Aorta (tissue), 5 donors: ENCODE measurements at regions of chr19 and their contacts with region 1.

Region 1: DNA sequence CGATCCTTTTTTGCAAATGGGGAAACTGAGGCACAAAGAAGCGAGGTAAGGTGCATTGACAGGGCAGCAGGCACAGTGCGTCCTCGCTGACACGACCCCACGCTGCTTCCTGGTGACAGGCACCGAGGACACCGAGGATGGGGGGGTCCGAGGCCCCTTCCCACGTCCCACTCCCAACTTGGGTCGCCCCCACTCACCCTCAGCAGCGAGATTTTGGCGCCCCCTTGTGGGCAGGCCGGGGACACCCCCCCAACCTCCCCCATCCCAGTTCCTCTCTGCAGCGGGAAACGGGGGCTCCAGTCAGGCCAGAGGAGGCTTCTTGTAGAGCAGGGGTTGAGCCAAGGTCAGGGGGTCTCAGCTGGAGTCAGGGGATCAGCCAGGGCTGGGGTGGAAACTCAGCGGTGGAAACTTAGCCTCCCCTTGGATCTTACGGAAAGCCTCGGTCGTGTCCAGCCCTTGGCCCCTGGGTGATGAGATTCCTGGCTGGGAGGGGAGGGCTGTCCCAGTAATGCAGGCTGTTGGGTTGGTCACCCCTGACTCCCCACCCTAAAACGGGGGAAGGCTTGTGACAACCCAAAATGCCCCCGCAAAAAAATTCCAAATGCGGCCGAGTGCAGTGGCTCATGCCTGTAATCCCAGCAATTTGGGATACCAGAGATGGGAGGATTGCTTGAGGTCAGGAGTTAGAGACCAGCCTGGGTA is 8.2 kb downstream of the SMIM24 start:
- DNase-seq: peak; percentile 63 to 88
- ATAC-seq: peak; percentile 74
- H3K4me3 ChIP-seq: no peak overlapping the region
- H3K27ac ChIP-seq: no peak overlapping the region
- H3K4me1 ChIP-seq: no peaks in the 10 kb centered on the region
- H3K27me3 ChIP-seq: no peaks in the 10 kb centered on the region

Region 2: DNA sequence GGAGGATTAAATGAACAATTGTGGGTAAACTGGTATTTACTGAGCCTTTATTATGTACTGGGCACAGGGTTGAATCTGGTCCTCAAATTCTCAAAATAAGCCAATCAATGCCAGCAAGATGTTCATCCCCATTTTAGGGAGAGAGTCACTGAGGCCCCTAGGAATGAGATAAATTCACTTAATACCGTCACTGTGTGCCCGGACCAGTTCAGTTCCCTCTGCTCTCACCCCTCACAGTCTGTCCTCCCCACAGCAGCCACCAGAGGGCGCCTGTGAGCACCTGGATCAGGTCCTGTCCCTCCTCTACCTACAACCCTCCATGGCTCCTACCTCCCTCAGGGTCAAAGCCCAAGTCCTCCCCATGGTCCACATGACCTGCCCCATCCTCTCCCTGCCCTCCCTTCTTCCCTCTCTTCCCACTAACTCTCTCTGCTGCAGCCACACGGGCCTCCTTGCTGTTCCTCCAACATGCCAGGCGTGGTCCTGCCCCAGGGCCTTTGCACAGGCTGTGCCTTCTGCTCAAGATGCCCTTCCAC is 147.7 kb before region 1 on chr19:
- intact Hi-C with region 1: loop called (anchors 2 to 5 kb)
- DNase-seq: peak; percentile 61 to 91
- ATAC-seq: peak; percentile 62
- H3K4me3 ChIP-seq: no peak overlapping the region
- H3K27ac ChIP-seq: no peak overlapping the region
- H3K4me1 ChIP-seq: no peaks in the 10 kb centered on the region
- H3K27me3 ChIP-seq: no peaks in the 10 kb centered on the region

Region 3: DNA sequence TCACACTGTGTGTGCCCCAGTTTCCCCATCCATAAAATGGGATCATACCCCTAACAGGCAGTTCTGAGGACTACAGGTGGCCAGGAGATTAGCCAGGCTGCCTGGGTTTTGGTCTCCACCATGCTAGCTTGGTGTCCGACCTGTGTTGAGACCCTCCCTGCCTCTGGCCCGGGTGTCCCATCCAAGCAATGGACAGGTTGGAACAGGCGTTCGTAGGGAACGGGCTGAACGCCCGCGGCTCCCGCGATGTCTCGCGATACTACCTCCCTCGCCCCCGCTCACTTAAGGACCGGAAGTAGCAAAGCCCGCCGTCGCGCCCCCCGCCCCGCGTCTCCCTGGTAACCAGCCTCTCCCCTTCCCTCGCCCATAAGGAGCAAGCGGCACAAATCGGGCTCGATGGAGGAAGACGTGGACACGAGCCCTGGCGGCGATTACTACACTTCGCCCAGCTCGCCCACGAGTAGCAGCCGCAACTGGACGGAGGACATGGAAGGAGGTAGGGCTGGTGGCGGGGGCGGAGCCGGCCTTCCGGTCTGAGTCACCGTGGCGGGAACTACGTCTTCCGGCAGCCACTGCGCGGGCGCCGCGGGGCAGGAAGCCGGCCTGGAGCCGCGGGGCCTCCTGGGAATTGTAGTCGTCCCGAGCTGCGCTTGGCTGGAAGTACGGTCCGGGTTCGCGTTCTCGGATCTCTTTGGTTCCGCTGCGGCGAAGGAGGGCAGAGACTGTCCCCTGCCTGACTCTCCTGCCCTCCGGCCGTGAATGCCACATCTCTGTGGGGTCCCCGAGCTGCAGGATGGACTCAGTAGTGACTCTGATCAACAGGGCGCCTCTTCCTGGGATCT is 37.2 kb before region 1 on chr19:
- intact Hi-C with region 1: loop called (anchors 5 kb)
- DNase-seq: peak; percentile 99 to 100
- ATAC-seq: peak; percentile 97
- H3K4me3 ChIP-seq: no peak overlapping the region
- H3K27ac ChIP-seq: peak overlapping the region in 1 of 2 donors; percentile 58
- H3K4me1 ChIP-seq: no peaks in the 10 kb centered on the region
- H3K27me3 ChIP-seq: no peaks in the 10 kb centered on the region